ENCODE measurements at regions of chr16 and their contacts with region 1.

Region 1: GRCh38 chr16:20806168-20807050 is at the starts of genes ERI2 and REXO5:
- DNase-seq: peak; percentile 89 to 95 (median 93)
- ATAC-seq: peak; percentile 91 to 95 (median 94)
- H3K4me3 ChIP-seq: peak within 1 kb of the TSS; percentile 43 to 87 (median 74)
- H3K27ac ChIP-seq: peak within 1 kb of the TSS; percentile 86 to 97 (median 92)
- H3K4me1 ChIP-seq: peaks cover 0 to 25% (median 11%) of the 10 kb centered on the region in 12 donors
- H3K27me3 ChIP-seq: no peaks in the 10 kb centered on the region
- CTCF ChIP-seq: peak in 11 of 12 donors; percentile 23 to 62 (median 43)
- POLR2A ChIP-seq: peak in 1 of 2 donors; percentile 54
- total RNA-seq, gene ERI2: 5.7 to 15.2 (median 11.9) TPM
- total RNA-seq, gene REXO5: 2.8 to 7.5 (median 4.8) TPM

Region 2: DNA sequence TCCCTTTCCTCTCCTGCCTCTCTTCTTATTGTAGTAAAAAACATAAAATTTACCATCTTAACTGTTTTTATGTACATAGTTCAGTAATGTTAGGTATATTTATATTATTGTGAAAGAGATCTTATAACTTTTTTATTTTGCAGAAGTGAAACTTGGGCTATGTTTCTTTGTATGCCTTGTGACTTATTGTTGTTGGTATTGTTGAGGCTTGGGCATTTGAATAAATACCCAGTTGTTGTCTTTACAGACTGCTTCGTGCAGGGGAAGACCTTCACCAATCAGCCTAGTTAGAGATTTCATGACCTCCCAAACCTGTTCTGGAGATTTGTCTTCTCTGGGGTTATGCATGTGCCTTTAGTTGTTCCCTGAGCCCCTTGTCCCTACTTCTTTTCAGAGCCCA is 31.8 kb after region 1 on chr16:
- intact Hi-C with region 1: loop called in 1 of 10 experiments (anchors 5 kb)
- DNase-seq: no peak
- ATAC-seq: no peak
- H3K4me3 ChIP-seq: no peak overlapping the region
- H3K27ac ChIP-seq: no peak overlapping the region
- H3K4me1 ChIP-seq: no peaks in the 10 kb centered on the region
- H3K27me3 ChIP-seq: no peaks in the 10 kb centered on the region
- CTCF ChIP-seq: no peak
- POLR2A ChIP-seq: no peak

Region 3: GRCh38 chr16:20900299-20901067 is 94.1 kb after region 1 on chr16 and contains the starts of genes DCUN1D3 and LYRM1:
- intact Hi-C with region 1: loop called in 1 of 10 experiments (anchors 2 kb)
- DNase-seq: peak; percentile 96 to 98 (median 97)
- ATAC-seq: peak; percentile 92 to 96 (median 93)
- H3K4me3 ChIP-seq: peak within 1 kb of the TSS; percentile 68 to 93 (median 80)
- H3K27ac ChIP-seq: peak within 1 kb of the TSS; percentile 95 to 99 (median 97)
- H3K4me1 ChIP-seq: peaks cover 17 to 70% (median 55%) of the 10 kb centered on the region in 12 donors
- H3K27me3 ChIP-seq: no peaks in the 10 kb centered on the region
- CTCF ChIP-seq: no peak
- POLR2A ChIP-seq: peak in 1 of 2 donors; percentile 93
- total RNA-seq, gene DCUN1D3: 8.3 to 21.4 (median 11.0) TPM
- total RNA-seq, gene LYRM1: 40.2 to 124 (median 54.6) TPM

Region 4: DNA sequence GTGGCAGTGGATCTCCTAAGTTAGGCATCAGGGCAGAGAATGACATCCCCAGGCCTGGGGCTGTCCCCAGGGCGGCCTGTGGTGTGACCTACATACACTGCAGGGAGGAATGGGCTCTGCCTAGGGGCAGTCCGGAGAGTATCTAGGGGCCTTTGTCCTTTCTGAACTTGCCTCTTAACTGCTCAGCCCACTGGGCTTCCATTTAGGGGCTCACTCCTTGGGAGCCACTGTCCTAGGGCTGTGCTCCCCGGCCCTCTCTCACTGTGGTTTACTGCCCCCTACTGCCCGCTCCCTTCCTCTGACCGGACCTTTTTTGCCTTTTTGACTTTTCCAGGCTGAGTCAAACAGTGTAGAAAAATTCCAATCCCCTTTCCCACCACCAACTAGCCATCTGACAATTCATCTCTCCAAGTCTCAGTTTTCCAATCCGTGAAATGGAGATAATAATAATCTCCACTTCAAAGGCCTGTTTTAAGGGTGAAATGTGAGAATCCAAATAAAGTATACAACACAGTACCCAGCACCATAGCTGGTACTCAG is 277.4 kb after region 1 on chr16:
- intact Hi-C with region 1: loop called in 2 of 10 experiments (anchors 5 kb)
- DNase-seq: peak; percentile 62 to 76 (median 67)
- ATAC-seq: peak; percentile 83 to 98 (median 92)
- H3K4me3 ChIP-seq: no peak overlapping the region
- H3K27ac ChIP-seq: peak overlapping the region in 1 of 12 donors; percentile 17
- H3K4me1 ChIP-seq: peaks cover 0 to 5% (median 1%) of the 10 kb centered on the region in 12 donors
- H3K27me3 ChIP-seq: no peaks in the 10 kb centered on the region
- CTCF ChIP-seq: peak; percentile 66 to 84 (median 79)
- POLR2A ChIP-seq: no peak

Region 5: DNA sequence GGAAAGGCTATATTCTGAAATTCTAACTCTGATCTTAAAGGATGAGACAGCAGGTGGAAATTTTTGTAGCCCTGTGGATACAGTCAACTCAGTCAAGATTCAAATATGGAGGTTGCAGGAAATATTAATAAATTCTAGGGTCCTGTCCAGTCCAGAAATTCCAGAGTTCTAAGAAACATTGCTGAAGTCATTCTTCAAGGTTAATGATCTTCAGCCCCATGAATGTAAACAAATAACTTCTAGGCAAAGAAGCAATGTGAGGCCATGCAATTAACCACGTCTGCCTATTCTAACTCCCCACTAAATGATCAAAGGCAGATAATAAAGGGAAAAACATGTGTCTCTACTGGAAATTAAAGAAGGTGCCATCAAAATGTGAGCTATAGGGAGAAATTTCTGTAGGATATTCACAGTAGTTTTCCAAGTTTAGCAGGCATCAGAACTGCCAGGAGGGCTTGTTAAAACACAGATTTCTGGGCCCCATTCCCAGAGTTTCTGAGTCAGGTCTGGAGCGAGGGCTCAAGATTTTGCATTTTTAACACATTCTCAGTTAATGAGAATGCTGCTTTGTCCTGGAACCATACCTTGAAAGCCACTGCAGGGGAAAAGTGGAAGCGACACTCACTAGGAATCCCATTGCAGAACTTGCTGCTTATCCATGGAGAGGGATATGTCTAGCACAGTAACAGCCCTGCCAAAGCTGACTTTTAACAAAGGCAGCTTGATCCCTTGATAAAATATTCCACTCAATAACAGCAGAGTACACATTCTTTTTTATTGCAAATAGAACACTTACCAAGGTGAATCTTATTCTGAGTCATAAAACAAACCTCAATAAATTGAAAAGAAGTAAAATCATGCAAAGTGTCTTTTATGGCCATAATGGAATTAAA is 282.5 kb after region 1 on chr16:
- intact Hi-C with region 1: loop called in 2 of 10 experiments (anchors 5 kb)
- DNase-seq: no peak
- ATAC-seq: no peak
- H3K4me3 ChIP-seq: no peak overlapping the region
- H3K27ac ChIP-seq: no peak overlapping the region
- H3K4me1 ChIP-seq: peaks cover 0 to 2% (median 0%) of the 10 kb centered on the region in 12 donors
- H3K27me3 ChIP-seq: no peaks in the 10 kb centered on the region
- CTCF ChIP-seq: no peak
- POLR2A ChIP-seq: no peak

Measured in heart left ventricle (tissue), 16 donors.